ENCODE measurements at regions of chr2 and their contacts with region 1.

Region 1: GRCh38 chr2:231104115-231104713 is 20.6 kb downstream of the HTR2B start:
- DNase-seq: peak; percentile 71
- H3K4me3 Mint-ChIP-seq: no peak overlapping the region
- H3K27ac Mint-ChIP-seq: peak overlapping the region; percentile 1
- H3K4me1 Mint-ChIP-seq: peaks cover 11% of the 10 kb centered on the region
- H3K27me3 Mint-ChIP-seq: no peaks in the 10 kb centered on the region

Region 2: DNA sequence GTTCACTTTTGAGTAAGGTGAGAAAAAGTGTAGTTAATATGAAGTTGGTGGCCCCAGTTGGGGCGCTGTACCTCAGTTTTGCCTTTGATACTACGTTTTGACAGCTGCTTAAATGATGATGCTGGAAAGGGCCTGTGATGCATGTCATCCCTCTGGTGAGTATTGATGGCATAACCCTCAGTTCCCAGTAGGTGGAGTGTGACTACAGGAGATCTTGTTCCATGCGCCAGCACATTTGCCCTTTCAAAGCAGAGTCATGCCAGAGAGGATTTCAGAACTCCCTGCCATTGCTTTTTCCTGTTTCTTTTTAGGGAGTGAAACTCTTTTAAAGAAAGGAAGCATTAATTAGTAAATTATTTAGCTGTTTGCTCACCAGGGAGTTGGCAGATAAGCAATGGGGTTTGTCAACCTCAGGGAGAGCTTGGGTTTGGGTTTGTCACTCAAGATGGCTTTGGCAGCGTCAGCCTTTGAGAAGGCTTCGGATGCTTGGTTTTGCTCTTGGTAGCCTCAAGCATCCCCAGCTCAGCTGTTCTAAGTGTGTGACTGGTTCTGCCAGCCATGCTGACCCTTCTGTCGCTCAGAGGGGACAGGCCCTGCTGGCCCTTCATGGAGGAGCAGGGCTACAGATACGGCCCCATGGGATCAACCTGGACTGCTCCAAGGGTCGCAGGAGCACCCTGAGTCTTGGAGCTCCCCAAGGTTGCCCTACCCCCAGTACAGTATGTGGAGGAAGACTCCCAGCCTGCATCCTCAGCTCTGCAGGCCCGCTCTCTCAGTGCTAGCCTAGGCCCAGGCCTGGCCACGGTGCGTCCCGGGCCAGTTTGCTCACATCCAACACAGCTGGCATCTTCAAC is 123.3 kb after region 1 on chr2:
- CTCF ChIA-PET with region 1: interaction called, 18 read pairs
- POLR2A ChIA-PET with region 1: no interaction called
- intact Hi-C with region 1: loop called (anchors 1 kb)
- DNase-seq: peak; percentile 51
- H3K4me3 Mint-ChIP-seq: no peak overlapping the region
- H3K27ac Mint-ChIP-seq: no peak overlapping the region
- H3K4me1 Mint-ChIP-seq: no peaks in the 10 kb centered on the region
- H3K27me3 Mint-ChIP-seq: no peaks in the 10 kb centered on the region

Measured in activated CD4-positive, alpha-beta memory T cell treated with anti-CD3 and anti-CD28 coated beads for 36 hours (primary cell).